Activated CD8-positive, alpha-beta T cell treated with anti-CD3 and anti-CD28 coated beads for 36 hours (primary cell): ENCODE measurements at regions of chr21 and their contacts with region 1.

Region 1: GRCh38 chr21:21163904-21164303 is 165.7 kb downstream of the NCAM2 start:
- DNase-seq: peak; percentile 62
- ATAC-seq: no peak
- H3K4me3 Mint-ChIP-seq: no peak overlapping the region
- H3K27ac Mint-ChIP-seq: no peak overlapping the region
- H3K4me1 Mint-ChIP-seq: no peaks in the 10 kb centered on the region
- H3K27me3 Mint-ChIP-seq: no peaks in the 10 kb centered on the region
- CTCF ChIP-seq: peak; percentile 71

Region 2: DNA sequence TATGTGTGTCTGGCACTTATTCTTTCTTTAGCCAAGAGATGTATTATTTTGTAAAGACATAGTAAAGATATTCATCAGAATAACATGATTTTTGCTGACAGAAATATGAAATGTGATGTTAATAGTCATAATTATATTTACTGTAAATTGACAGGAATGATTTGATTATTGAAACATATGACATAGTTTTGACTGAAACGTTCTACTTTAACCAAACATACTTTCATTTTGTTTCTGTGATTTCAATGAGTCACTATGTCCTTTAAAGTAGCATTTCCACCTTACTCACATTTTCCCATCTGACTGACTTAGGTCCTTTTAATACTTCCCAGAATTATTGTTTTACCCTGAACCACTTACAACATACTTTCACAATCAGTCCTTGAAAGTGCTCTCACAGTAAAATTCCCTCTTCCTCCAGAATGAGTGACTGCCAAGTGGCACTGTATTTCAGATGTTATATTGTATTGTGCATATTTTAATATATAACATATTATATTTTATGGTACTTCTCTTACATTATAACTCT is 272.2 kb after region 1 on chr21:
- CTCF ChIA-PET with region 1: no interaction called
- POLR2A ChIA-PET with region 1: no interaction called
- intact Hi-C with region 1: no loop called
- DNase-seq: no peak
- ATAC-seq: no peak
- H3K4me3 Mint-ChIP-seq: no peak overlapping the region
- H3K27ac Mint-ChIP-seq: no peak overlapping the region
- H3K4me1 Mint-ChIP-seq: no peaks in the 10 kb centered on the region
- H3K27me3 Mint-ChIP-seq: no peaks in the 10 kb centered on the region
- CTCF ChIP-seq: no peak

Region 3: DNA sequence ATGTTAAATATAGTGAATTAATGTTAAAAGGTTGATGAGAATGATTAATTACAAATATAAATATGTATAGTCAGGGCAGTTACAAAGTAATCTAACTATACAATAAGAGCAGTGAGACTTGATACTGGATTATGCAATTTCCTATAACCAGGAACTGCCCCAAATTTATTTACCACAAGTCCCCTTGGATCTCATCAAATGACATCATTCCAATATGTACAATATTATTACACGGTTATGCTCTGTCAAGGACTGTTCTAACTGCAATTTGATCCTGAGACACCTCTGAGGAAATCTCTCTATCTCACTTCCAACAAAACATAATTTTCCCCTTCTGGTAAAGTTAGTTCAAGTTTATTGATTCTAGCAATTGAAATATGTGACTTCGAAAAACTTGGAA is 751.9 kb after region 1 on chr21:
- CTCF ChIA-PET with region 1: no interaction called
- POLR2A ChIA-PET with region 1: no interaction called
- intact Hi-C with region 1: loop called (anchors 10 kb)
- DNase-seq: no peak
- ATAC-seq: no peak
- H3K4me3 Mint-ChIP-seq: no peak overlapping the region
- H3K27ac Mint-ChIP-seq: no peak overlapping the region
- H3K4me1 Mint-ChIP-seq: no peaks in the 10 kb centered on the region
- H3K27me3 Mint-ChIP-seq: no peaks in the 10 kb centered on the region
- CTCF ChIP-seq: no peak